Endothelial cell of umbilical vein (primary cell): ENCODE measurements at regions of chr1 and their contacts with region 1.

Region 1: DNA sequence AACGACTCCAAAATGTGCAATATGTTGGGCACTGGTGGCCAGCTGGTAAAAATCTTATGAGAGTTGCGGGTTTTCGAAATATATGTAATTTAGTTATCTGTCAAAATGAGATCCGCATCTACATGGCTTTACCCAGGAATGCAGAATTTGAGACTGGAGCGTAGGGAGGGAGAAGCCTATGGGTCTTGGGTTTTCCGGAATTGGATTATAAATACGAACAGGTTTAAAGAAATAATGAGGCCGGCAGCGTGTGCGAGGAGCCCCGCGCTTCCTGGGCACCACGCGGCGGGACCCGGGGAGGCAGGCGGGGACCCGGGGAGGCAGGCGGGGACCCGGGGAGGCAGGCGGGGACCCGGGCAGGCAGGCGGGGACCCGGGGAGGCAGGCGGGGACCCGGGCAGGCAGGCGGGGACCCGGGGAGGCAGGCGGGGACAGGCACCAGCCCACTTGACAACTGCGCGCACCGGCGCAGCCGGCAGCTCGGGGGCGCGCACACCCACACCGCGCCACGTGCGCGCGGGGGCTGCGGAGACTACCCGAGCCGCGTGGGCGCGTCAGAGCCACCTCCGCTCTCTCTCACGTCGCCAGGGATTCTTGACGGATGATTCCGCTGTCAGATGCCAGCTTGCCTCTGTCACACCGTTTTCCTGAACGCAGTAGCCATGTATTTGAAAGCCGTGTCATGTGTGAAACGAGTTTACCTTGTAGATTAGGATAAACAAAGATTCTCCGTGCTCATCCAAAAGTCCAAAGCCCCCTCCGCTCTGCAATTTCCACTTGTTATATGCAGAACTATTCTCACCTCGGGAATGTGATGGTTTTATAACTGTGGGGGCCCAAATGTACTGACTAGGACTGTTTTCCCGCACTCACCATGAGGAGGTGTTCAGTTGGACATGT is 54.3 kb upstream of the HNRNPU start:
- DNase-seq: peak; percentile 38
- H3K4me3 ChIP-seq: peak overlapping the region; percentile 52 to 64 (median 63)
- H3K27ac ChIP-seq: no peak overlapping the region
- H3K4me1 ChIP-seq: peaks cover 12% of the 10 kb centered on the region
- H3K27me3 ChIP-seq: no peaks in the 10 kb centered on the region
- CTCF ChIP-seq: no peak
- POLR2A ChIP-seq: no peak

Region 2: GRCh38 chr1:244835276-244836134 is 83.2 kb before region 1 on chr1 and contains the start of gene COX20:
- CTCF ChIA-PET with region 1: no interaction called
- POLR2A ChIA-PET with region 1: no interaction called
- dilution Hi-C with region 1: no loop called
- intact Hi-C with region 1: no loop called
- DNase-seq: peak; percentile 91
- H3K4me3 ChIP-seq: peak within 1 kb of the TSS; percentile 36 to 85 (median 80)
- H3K27ac ChIP-seq: peak within 1 kb of the TSS; percentile 85
- H3K4me1 ChIP-seq: peaks cover 23% of the 10 kb centered on the region
- H3K27me3 ChIP-seq: no peaks in the 10 kb centered on the region
- CTCF ChIP-seq: no peak
- POLR2A ChIP-seq: peak; percentile 68
- total RNA-seq, gene COX20: 30.2 and 37.0 TPM in 2 replicates

Region 3: DNA sequence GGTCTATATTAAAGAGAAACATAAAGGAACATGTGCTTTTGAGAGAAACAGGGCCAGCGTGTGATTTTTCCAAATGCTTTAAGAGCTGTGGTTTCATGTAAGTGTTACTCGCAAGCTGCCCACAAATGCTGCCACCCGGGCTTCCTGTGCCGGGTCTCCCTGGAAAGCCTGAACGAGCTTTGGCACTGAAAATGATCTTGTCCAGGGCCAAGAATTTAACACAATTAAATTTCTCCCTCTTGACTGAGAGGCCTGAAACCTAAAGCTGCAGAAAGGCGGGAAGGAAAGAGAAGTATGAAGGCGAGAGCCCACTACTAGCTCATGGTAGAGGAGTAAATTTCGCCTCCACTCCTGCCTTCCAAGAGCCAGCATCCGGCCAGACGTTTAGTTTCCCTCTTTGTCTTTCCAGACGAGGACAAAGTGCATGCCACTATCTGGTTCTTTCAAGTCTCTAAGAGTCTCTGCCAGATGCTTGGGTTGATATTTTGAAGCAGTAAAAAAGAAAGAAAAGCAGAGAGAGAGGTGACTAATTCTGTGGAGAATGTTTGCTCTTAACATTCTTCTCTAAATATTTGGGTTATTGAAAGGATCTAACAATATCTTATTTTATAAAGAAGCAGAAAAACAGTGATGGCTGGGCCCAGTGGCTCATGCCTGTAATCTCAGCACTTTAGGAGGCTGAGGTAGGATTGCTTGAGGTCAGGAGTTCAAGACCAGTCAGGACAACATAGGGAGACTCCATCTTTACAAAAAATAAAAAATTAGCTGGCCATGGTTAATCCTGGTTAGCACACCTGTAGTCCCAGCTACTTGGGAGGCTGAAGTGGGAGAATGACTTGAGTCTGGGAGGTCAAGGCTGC is 45.7 kb after region 1 on chr1:
- CTCF ChIA-PET with region 1: interaction called, 3 read pairs
- POLR2A ChIA-PET with region 1: no interaction called
- dilution Hi-C with region 1: no loop called
- intact Hi-C with region 1: loop called (anchors 2 kb)
- DNase-seq: peak; percentile 82
- H3K4me3 ChIP-seq: peak overlapping the region in 1 of 3 experiments; percentile 15
- H3K27ac ChIP-seq: peak overlapping the region; percentile 95
- H3K4me1 ChIP-seq: peaks cover 34% of the 10 kb centered on the region
- H3K27me3 ChIP-seq: no peaks in the 10 kb centered on the region
- CTCF ChIP-seq: no peak
- POLR2A ChIP-seq: peak; percentile 49